ENCODE measurements at regions of chr1 and their contacts with region 1.

Region 1: GRCh38 chr1:154878371-154879022 is 8.4 kb upstream of the KCNN3 start:
- DNase-seq: peak; percentile 77 to 88 (median 80)
- ATAC-seq: peak; percentile 84 to 96 (median 94)
- H3K4me3 ChIP-seq: no peak overlapping the region
- H3K27ac ChIP-seq: no peak overlapping the region
- H3K4me1 ChIP-seq: peaks cover 0 to 4% (median 0%) of the 10 kb centered on the region in 12 donors
- H3K27me3 ChIP-seq: no peaks in the 10 kb centered on the region
- CTCF ChIP-seq: peak; percentile 70 to 92 (median 86)
- POLR2A ChIP-seq: no peak

Region 2: DNA sequence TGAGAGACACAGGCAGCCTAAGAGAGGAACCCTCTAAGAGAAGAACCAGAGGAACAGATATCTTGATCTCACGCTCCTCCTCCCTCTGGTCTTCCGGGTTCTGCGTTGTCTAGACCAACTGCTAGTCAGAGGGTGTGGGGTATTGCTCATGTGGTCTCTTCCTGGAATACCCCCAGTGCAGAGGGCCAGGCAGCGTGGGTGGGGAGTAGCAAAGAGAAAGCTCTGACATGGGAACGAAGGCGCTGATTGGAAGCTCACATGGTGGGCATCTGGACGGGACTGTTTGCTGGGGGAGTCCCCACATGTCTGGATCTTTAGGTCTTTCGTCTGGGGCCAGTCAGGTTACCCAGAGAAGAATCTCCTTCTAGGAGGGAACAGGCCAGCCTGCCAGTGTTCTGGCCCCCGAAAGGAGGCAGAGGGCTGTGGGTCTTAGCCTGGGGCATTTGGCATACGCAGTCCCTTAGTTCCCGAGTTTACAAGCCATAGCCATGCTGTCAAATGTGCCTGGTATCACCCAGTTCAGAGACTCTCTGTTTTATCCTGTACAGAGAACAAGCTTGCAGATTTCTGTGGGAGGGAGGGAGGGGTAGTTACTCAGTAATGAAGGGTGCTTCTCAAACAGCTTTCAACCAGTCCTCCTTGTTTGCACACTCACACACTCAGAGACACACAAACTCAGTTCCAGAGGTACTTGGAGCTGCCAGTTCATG is 491.7 kb before region 1 on chr1:
- intact Hi-C with region 1: no loop called
- DNase-seq: no peak
- ATAC-seq: peak in 3 of 4 donors; percentile 18 to 53 (median 42)
- H3K4me3 ChIP-seq: peak overlapping the region in 1 of 12 donors; percentile 1
- H3K27ac ChIP-seq: peak overlapping the region in 1 of 12 donors; percentile 70
- H3K4me1 ChIP-seq: peaks cover 0 to 18% (median 0%) of the 10 kb centered on the region in 12 donors
- H3K27me3 ChIP-seq: no peaks in the 10 kb centered on the region
- CTCF ChIP-seq: no peak
- POLR2A ChIP-seq: no peak

Region 3: DNA sequence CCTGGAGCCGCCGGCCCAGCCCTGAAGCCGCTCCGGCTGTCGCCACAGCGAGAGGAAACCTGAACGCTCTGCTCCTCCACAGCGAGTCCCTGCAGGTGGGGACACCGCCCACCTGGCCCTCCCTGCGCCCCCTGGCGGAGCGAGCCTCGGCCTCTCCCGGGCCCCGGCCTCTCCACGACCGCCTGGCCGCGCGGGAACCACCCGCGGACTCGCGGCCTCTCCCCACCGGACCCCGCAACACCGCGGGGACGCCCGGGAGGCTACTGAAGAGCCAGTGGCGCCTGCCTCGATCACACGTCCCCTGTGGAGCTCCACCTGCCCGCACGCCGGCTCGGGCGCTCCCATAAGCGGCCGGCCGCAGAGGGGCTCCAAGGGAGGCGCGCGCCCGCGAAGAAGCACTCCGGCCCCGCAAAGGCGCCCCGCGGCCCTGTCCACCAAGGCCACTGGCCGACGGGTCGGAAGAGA is 118.0 kb before region 1 on chr1:
- intact Hi-C with region 1: loop called in 6 of 10 experiments (anchors 2 to 5 kb)
- DNase-seq: peak; percentile 43 to 88 (median 58)
- ATAC-seq: peak in 3 of 4 donors; percentile 82 to 92 (median 91)
- H3K4me3 ChIP-seq: peak overlapping the region; percentile 13 to 58 (median 44)
- H3K27ac ChIP-seq: peak overlapping the region in 1 of 12 donors; percentile 57
- H3K4me1 ChIP-seq: peaks cover 0 to 29% (median 17%) of the 10 kb centered on the region in 12 donors
- H3K27me3 ChIP-seq: peaks cover 0 to 33% (median 0%) of the 10 kb centered on the region in 9 donors
- CTCF ChIP-seq: peak; percentile 66 to 83 (median 74)
- POLR2A ChIP-seq: no peak

Region 4: DNA sequence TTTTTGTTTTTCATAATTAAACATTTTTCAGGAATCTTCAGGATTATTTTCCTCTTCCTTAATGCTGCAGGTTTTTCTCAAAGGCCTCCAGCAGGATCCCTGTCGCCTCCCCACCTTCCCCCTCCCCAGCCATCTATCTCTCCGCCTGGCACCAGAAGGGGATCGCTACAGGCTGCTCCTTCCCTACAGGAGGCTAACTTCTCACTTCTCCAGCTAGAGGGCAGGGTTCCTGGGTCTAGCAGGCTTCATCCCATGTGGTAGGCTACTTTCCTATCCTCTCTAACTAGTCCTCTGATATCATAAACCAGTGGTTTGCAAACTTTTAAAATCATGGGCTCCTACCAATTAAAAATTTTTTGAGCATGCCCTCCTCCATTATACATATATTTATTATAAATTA is 112.5 kb before region 1 on chr1:
- intact Hi-C with region 1: loop called in 7 of 10 experiments (anchors 2 to 10 kb)
- DNase-seq: no peak
- ATAC-seq: peak in 3 of 4 donors; percentile 36 to 64 (median 54)
- H3K4me3 ChIP-seq: no peak overlapping the region
- H3K27ac ChIP-seq: no peak overlapping the region
- H3K4me1 ChIP-seq: peaks cover 0 to 23% (median 15%) of the 10 kb centered on the region in 12 donors
- H3K27me3 ChIP-seq: peaks cover 0 to 17% (median 0%) of the 10 kb centered on the region in 9 donors
- CTCF ChIP-seq: peak in 9 of 12 donors; percentile 12 to 44 (median 26)
- POLR2A ChIP-seq: no peak

Region 5: DNA sequence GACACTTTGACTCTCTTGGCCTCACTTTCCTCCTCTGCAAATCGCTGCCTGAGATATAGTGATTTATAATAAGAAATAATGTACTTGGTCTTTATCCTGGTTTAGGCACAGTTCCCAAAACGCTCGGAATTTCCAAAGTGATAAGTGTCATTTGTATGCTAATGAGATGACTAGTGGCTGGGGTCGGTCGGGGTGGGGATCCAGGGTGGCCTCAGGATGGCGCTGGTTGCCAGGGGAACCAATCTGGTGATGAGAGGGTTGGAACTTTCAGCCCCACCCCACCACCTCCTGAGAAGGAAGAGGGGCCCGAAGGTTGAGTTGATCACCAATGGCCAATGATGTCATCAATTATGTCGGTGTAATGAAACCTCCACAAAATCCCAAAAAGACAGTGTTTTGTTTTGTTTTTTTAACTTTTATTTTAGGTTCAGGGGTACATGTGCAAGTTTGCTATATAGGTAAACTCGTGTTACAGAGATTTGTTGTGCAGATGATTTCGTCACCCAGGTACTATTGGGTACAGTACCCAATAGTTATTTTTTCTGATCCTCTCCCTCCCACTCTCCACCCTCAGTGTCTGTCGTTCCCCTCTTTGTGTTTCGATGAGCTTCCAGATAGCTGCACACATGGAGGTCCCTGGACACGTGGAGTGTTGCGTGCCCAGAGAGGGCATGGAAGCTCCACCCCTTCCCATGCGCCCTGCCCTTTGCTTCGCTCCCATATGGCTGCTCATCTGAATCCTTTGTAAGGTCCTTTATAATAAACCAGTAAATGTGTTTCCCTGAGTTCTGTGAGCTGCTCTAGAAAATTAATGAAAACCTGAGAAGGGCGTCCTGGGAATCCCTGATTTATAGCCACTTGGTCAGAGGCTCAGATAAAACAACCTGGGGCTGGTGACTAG is 105.6 kb before region 1 on chr1:
- intact Hi-C with region 1: loop called in 5 of 10 experiments (anchors 5 to 10 kb)
- DNase-seq: no peak
- ATAC-seq: no peak
- H3K4me3 ChIP-seq: no peak overlapping the region
- H3K27ac ChIP-seq: no peak overlapping the region
- H3K4me1 ChIP-seq: peaks cover 0 to 13% (median 5%) of the 10 kb centered on the region in 12 donors
- H3K27me3 ChIP-seq: no peaks in the 10 kb centered on the region
- CTCF ChIP-seq: peak in 6 of 12 donors; percentile 5 to 17 (median 6)
- POLR2A ChIP-seq: no peak